PC-9 (cell line): ENCODE measurements at regions of chr3 and their contacts with region 1.

Region 1: GRCh38 chr3:197516517-197516889 is 39.3 kb downstream of the BDH1 start:
- DNase-seq: peak; percentile 91 to 98
- H3K4me3 ChIP-seq: peak overlapping the region; percentile 33; the same call in 1 of the 2 replicates
- H3K27ac ChIP-seq: peak overlapping the region; percentile 73
- H3K4me1 ChIP-seq: peaks cover 20% of the 10 kb centered on the region
- H3K27me3 ChIP-seq: no peaks in the 10 kb centered on the region
- CTCF ChIP-seq: no peak

Region 2: GRCh38 chr3:197083486-197083885 is 433.0 kb before region 1 on chr3:
- CTCF ChIA-PET with region 1: no interaction called
- POLR2A ChIA-PET with region 1: interaction called, 21 read pairs
- intact Hi-C with region 1: no loop called
- DNase-seq: no peak
- H3K4me3 ChIP-seq: no peak overlapping the region
- H3K27ac ChIP-seq: no peak overlapping the region
- H3K4me1 ChIP-seq: no peaks in the 10 kb centered on the region
- H3K27me3 ChIP-seq: no peaks in the 10 kb centered on the region
- CTCF ChIP-seq: no peak

Region 3: GRCh38 chr3:197229836-197230235 is 286.7 kb before region 1 on chr3:
- CTCF ChIA-PET with region 1: interaction called, 10 read pairs
- POLR2A ChIA-PET with region 1: no interaction called
- intact Hi-C with region 1: no loop called
- DNase-seq: no peak
- H3K4me3 ChIP-seq: no peak overlapping the region
- H3K27ac ChIP-seq: no peak overlapping the region
- H3K4me1 ChIP-seq: no peaks in the 10 kb centered on the region
- H3K27me3 ChIP-seq: no peaks in the 10 kb centered on the region
- CTCF ChIP-seq: no peak

Region 4: DNA sequence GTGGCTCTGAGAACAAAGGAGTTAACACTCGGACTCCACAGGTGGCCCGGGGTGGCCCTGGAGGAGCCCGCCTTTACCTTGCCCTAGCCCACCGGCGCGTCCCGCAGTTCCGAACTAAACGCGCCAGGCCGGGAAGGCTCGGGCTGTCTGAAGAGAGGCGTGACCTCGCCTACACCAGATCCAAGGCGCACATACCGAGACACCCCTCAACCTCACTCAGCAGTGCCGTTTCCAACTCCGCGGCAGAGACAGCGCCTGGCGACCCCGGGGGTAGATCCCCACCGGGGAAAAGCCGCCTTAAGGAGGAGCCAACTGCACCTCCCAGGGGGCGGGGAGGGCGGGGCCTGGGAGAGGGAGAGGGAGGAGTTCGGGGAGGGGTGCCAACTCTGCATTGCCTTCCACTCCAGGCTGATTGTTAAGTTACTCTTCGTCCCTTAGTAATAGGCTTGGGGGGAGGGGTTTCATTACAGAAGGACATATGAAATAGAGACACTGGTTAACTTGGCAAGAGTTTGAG is 218.1 kb before region 1 on chr3 and contains the start of gene DLG1:
- CTCF ChIA-PET with region 1: no interaction called
- POLR2A ChIA-PET with region 1: interaction called, 15 read pairs
- intact Hi-C with region 1: loop called (anchors 2 kb)
- DNase-seq: peak; percentile 93
- H3K4me3 ChIP-seq: peak within 1 kb of the TSS; percentile 62
- H3K27ac ChIP-seq: peak within 1 kb of the TSS; percentile 81
- H3K4me1 ChIP-seq: peaks cover 57% of the 10 kb centered on the region
- H3K27me3 ChIP-seq: no peaks in the 10 kb centered on the region
- CTCF ChIP-seq: 0 out of 2 replicates have a peak, but pooled peaks have one; percentile 22
- total RNA-seq, gene DLG1: 193 and 201 TPM in 2 replicates

Region 5: DNA sequence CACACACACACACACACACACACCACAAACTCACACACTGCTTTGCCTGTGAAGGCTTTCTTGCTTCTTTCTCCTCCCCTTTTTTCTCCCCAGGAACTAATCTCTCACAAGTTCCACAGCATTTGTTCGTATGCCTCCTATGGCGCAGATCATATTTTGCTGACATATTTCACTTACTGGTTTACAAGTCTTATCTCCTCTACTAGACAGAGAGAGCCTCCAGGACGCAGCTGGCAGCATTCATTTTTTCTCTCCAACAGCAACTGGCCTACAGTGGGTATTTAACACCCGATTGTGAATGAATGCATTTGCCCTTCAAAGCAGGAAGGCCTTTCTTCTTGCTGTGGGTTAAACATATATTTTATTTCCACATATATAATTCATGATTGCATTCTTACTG is 171.1 kb before region 1 on chr3:
- CTCF ChIA-PET with region 1: no interaction called
- POLR2A ChIA-PET with region 1: interaction called, 15 read pairs
- intact Hi-C with region 1: no loop called
- DNase-seq: no peak
- H3K4me3 ChIP-seq: no peak overlapping the region
- H3K27ac ChIP-seq: no peak overlapping the region
- H3K4me1 ChIP-seq: peaks cover 5% of the 10 kb centered on the region
- H3K27me3 ChIP-seq: no peaks in the 10 kb centered on the region
- CTCF ChIP-seq: no peak

Region 6: GRCh38 chr3:197541756-197542539 is 25.4 kb after region 1 on chr3:
- CTCF ChIA-PET with region 1: no interaction called
- POLR2A ChIA-PET with region 1: interaction called, 8 read pairs
- intact Hi-C with region 1: loop called (anchors 1 kb)
- DNase-seq: no peak
- H3K4me3 ChIP-seq: no peak overlapping the region
- H3K27ac ChIP-seq: peak overlapping the region; percentile 80
- H3K4me1 ChIP-seq: peaks cover 36% of the 10 kb centered on the region
- H3K27me3 ChIP-seq: no peaks in the 10 kb centered on the region
- CTCF ChIP-seq: no peak

Region 7: DNA sequence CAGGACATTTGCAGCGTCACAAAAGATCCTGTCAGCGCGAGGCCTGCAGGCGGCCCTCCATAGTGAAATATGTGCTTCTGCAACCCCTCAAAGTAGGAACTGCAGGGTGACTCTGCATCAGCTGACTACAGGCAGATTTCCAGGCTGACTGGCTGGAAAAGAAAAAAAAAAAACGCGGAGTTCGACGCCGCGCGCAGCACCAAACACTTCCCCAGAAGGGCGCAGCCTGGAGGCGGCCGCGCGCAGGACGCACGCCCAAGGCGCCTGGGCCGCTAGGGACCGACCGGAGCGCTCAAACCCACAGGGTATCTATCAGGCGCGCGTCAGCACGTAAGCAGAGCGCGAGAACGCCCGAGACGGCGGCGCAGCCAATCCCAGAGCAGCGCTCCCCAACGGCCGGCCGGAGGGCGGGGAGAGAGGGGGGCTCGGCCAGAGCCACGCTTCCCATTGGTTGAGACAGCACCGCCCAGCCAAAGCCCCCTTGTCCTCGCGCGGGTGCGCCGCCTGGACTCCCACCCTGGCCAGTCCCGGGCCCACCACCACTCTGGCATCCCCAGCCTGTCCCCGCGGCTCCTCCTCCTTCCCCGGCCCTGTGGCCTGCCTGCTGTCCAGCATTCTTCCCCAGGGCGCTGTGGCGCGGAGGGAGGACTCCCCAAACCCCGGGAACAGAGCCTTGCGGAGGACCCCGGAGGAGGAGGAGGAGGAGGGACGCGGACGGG is 38.2 kb after region 1 on chr3:
- CTCF ChIA-PET with region 1: no interaction called
- POLR2A ChIA-PET with region 1: no interaction called
- intact Hi-C with region 1: loop called (anchors 2 kb)
- DNase-seq: peak; percentile 94 to 99
- H3K4me3 ChIP-seq: peak overlapping the region; percentile 75
- H3K27ac ChIP-seq: peak overlapping the region; percentile 34
- H3K4me1 ChIP-seq: peaks cover 14% of the 10 kb centered on the region
- H3K27me3 ChIP-seq: no peaks in the 10 kb centered on the region
- CTCF ChIP-seq: peak; percentile 68; the same call in 1 of the 2 replicates